K562 (cell line): ENCODE measurements at regions of chr22 and their contacts with region 1.

Region 1: GRCh38 chr22:22144858-22145257 is 99.7 kb upstream of the VPREB1 start:
- DNase-seq: no peak
- ATAC-seq: peak; percentile 26; the same call in 1 of the 3 replicates
- H3K4me3 ChIP-seq: no peak overlapping the region
- H3K27ac ChIP-seq: no peak overlapping the region
- H3K4me1 ChIP-seq: peaks cover 0 to 11% of the 10 kb centered on the region in 2 experiments; a peak in 2 of 5 replicates
- H3K27me3 ChIP-seq: peaks cover 10 to 18% of the 10 kb centered on the region in 2 experiments
- CTCF ChIP-seq: no peak
- EP300 ChIP-seq: no peak
- POLR2A ChIP-seq: no peak
- RAD21 ChIP-seq: no peak

Region 2: DNA sequence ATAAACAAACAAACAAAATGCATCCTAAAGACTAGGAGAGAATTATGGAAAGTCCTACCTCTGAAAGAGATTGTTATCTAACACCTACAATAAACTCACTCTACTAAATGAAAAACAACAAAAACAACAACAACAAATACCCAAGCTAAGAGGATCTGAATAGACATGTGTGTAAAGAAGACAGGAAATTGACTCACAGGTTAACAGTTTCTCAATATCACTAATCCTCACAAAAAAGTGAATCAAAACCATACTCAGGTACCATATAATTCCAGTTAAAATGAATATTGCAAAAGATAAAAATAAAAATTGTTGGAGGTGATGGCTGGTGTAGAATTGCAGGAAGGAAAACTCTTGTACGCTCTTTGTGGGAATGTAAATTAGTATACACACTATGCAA is 51.9 kb before region 1 on chr22:
- CTCF ChIA-PET with region 1: no interaction called
- POLR2A ChIA-PET with region 1: no interaction called
- in situ Hi-C with region 1: no loop called
- intact Hi-C with region 1: no loop called
- DNase-seq: no peak
- ATAC-seq: no peak
- H3K4me3 ChIP-seq: no peak overlapping the region
- H3K27ac ChIP-seq: no peak overlapping the region
- H3K4me1 ChIP-seq: no peaks in the 10 kb centered on the region
- H3K27me3 ChIP-seq: peaks cover 52 to 79% of the 10 kb centered on the region in 2 experiments
- CTCF ChIP-seq: no peak
- EP300 ChIP-seq: no peak
- POLR2A ChIP-seq: no peak
- RAD21 ChIP-seq: no peak

Region 3: GRCh38 chr22:22130953-22131608 is 13.8 kb before region 1 on chr22:
- CTCF ChIA-PET with region 1: no interaction called
- POLR2A ChIA-PET with region 1: interaction called, 81 read pairs
- in situ Hi-C with region 1: no loop called
- intact Hi-C with region 1: no loop called
- DNase-seq: no peak
- ATAC-seq: peak; percentile 27; the same call in 2 of the 3 replicates
- H3K4me3 ChIP-seq: no peak overlapping the region
- H3K27ac ChIP-seq: no peak overlapping the region
- H3K4me1 ChIP-seq: peaks cover 0 to 2% of the 10 kb centered on the region in 2 experiments; a peak in 2 of 5 replicates
- H3K27me3 ChIP-seq: peaks cover 14 to 53% of the 10 kb centered on the region in 2 experiments
- CTCF ChIP-seq: no peak
- EP300 ChIP-seq: no peak
- POLR2A ChIP-seq: no peak
- RAD21 ChIP-seq: no peak

Region 4: GRCh38 chr22:22156716-22157347 is 12.0 kb after region 1 on chr22:
- CTCF ChIA-PET with region 1: interaction called, 4 read pairs
- POLR2A ChIA-PET with region 1: interaction called, 27 read pairs
- in situ Hi-C with region 1: no loop called
- intact Hi-C with region 1: no loop called
- DNase-seq: peak; percentile 98 to 100 (median 99)
- ATAC-seq: peak; percentile 98
- H3K4me3 ChIP-seq: no peak overlapping the region
- H3K27ac ChIP-seq: peak overlapping the region; percentile 1; the same call in 1 of the 3 replicates
- H3K4me1 ChIP-seq: peaks cover 0 to 4% of the 10 kb centered on the region in 2 experiments; a peak in 1 of 5 replicates
- H3K27me3 ChIP-seq: peaks cover 8 to 9% of the 10 kb centered on the region in 2 experiments
- CTCF ChIP-seq: peak in 1 of 3 experiments; percentile 99; a peak in 2 of 6 replicates
- EP300 ChIP-seq: peak; percentile 79
- POLR2A ChIP-seq: no peak
- RAD21 ChIP-seq: no peak